Left colon (tissue), 2 donors: ENCODE measurements at regions of chr16 and their contacts with region 1.

Region 1: DNA sequence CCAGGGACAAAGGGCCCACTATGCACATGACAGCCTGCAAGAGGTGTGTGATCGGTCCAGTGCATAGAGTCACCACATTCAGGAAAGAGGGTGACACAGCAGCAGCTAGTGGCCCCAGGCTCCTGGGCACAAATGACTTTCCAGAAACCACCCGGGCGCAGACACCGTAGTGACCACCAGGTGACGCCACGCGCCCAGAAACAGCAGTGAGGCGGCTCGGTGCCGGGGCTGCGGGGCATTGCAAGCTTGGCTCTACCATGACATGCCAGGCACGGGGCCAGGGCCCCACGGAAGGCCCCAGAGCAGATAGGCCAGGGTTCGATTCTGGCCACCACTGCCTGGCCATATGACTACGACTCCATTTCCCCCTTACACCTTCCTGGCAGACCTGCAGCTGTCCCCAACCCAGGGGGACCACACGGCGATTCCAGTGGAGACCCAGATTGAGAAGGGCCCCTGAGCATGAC is 6.7 kb downstream of the RHBDF1 start:
- DNase-seq: peak; percentile 68 to 90
- ATAC-seq: peak; percentile 89

Region 2: DNA sequence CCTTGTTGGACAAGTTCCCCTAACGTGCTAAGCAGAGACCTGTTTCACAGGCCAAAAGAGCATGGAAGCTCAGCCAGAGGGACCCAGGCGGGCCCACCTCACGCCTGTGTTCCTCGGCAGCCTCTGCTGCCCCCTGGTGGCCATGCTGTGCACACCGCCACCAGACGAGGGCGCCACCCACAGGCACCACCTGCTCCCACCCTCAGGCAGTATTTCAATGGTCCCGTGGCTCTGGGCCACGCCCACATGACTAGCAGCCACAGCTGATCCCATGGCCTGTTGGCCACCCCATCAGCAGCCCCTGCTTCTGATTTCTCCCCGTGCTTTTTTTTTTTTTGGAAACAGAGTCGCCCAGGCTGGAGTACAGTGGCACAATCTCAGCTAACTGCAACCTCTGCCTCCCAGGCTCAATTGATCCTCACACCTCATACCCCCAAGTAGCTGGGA is 31.3 kb after region 1 on chr16:
- intact Hi-C with region 1: loop called in 1 of 2 experiments (anchors 2 kb)
- DNase-seq: peak; percentile 88 to 93
- ATAC-seq: peak; percentile 96